B cell (primary cell): ENCODE measurements at regions of chr4 and their contacts with region 1.

Region 1: GRCh38 chr4:82373816-82374625 is at the start of gene HNRNPD:
- DNase-seq: peak; percentile 98
- ATAC-seq: peak; percentile 86
- H3K4me3 ChIP-seq: peak within 1 kb of the TSS; percentile 89 to 98 (median 95)
- H3K4me3 Mint-ChIP-seq: peak within 1 kb of the TSS; percentile 93
- H3K27ac ChIP-seq: peak within 1 kb of the TSS; percentile 98
- H3K27ac Mint-ChIP-seq: peak within 1 kb of the TSS; percentile 98
- H3K4me1 ChIP-seq: peaks cover 38% of the 10 kb centered on the region in 2 donors
- H3K4me1 Mint-ChIP-seq: peaks cover 51% of the 10 kb centered on the region
- H3K27me3 ChIP-seq: no peaks in the 10 kb centered on the region
- H3K27me3 Mint-ChIP-seq: no peaks in the 10 kb centered on the region
- CTCF ChIP-seq: no peak
- total RNA-seq, gene HNRNPD: 266 and 280 TPM in 2 replicates

Region 2: DNA sequence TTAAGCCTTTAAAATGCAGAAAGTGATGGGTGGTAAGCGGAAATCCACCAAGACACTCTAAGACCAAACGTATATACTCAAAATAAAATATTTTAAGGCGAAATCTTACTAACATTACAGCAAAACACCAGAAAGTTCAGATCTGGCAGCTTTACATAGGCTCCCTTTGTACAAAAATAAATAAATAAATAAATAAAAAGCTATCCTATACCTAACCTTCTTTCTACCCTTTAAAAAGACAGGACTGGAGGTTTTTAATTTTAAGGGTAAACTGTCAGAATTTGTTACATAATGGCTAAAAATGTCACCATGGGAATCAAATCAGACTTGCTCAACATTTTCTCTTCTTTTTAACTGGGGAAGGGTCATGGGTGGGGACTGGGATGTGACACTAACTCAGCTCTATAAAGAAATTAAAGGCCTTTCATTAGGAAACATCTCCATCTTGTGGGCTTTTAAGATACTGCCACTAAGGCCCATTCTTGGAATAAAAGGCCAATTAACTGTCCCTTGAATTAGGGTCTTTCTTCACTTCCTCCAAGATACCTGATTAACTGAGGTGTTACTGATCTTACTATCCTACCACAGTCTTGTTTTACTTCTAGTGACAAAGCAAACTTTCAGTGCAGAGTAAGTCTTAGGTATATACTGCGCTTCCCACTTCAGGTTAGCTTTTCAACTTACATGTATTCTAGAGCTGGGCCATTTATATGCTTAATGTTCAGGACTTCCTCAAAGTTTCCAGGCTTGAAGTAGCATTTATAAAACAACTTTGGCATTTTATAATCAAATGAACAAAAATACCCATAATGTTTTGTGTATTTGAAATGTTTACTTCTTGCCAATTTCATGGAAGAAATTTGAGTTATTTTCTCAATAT is 13.5 kb before region 1 on chr4:
- CTCF ChIA-PET with region 1: interaction called, 31 read pairs
- POLR2A ChIA-PET with region 1: interaction called, 3 read pairs
- intact Hi-C with region 1: loop called (anchors 1 kb)
- DNase-seq: peak; percentile 66
- ATAC-seq: peak; percentile 65
- H3K4me3 ChIP-seq: no peak overlapping the region
- H3K4me3 Mint-ChIP-seq: no peak overlapping the region
- H3K27ac ChIP-seq: peak overlapping the region in 1 of 2 donors; percentile 69
- H3K27ac Mint-ChIP-seq: peak overlapping the region; percentile 74
- H3K4me1 ChIP-seq: peaks cover 37 to 67% of the 10 kb centered on the region in 2 donors
- H3K4me1 Mint-ChIP-seq: peaks cover 75% of the 10 kb centered on the region
- H3K27me3 ChIP-seq: no peaks in the 10 kb centered on the region
- H3K27me3 Mint-ChIP-seq: no peaks in the 10 kb centered on the region
- CTCF ChIP-seq: peak; percentile 85

Region 3: DNA sequence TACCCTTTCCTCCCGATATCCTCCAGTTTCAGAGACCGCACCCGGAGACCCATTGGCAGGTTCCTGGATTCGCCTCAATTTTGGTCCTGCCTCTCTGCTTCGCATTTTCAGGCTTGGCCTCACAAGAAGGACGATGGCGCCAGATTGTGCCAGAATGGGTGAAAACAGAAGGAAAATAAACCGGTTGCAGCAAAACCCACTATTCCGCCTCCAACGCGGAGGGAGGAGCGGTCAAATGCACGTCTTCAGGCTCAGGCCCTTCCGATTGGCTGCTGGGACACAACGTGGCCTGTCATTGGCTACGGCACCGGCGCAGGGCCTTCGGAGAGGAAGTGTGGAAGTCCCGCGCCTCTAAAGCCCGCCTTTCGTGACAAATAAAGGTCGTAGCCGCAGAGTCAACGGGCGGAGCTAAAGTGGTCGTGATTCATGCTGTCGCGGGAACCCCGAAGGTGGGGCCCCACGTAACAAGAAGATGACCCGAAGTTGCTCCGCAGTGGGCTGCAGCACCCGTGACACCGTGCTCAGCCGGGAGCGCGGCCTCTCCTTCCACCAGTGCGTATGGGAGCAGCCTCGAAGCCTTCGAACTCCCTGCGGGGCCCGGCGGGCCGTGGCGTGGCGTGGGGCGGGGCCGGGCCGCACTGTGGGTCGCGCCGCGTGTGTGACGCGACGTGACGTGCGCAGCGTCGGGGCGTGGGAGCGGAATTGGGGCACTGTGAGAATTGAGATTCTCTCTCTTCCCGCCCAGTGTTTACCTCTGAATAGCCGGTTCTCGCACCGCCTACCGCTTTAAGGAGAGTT is 526.5 kb after region 1 on chr4 and contains the start of gene THAP9:
- CTCF ChIA-PET with region 1: no interaction called
- POLR2A ChIA-PET with region 1: interaction called, 7 read pairs
- intact Hi-C with region 1: loop called (anchors 1 kb)
- DNase-seq: peak; percentile 99
- ATAC-seq: peak; percentile 90
- H3K4me3 ChIP-seq: peak within 1 kb of the TSS; percentile 73 to 92 (median 90)
- H3K4me3 Mint-ChIP-seq: no peak within 1 kb of the TSS
- H3K27ac ChIP-seq: peak within 1 kb of the TSS; percentile 97 to 98
- H3K27ac Mint-ChIP-seq: no peak within 1 kb of the TSS
- H3K4me1 ChIP-seq: peaks cover 22 to 27% of the 10 kb centered on the region in 2 donors
- H3K4me1 Mint-ChIP-seq: peaks cover 11% of the 10 kb centered on the region
- H3K27me3 ChIP-seq: no peaks in the 10 kb centered on the region
- H3K27me3 Mint-ChIP-seq: no peaks in the 10 kb centered on the region
- CTCF ChIP-seq: no peak
- total RNA-seq, gene THAP9: 6.8 and 7.8 TPM in 2 replicates

Region 4: GRCh38 chr4:83034630-83035494 is 660.8 kb after region 1 on chr4 and contains the start of gene COPS4:
- CTCF ChIA-PET with region 1: no interaction called
- POLR2A ChIA-PET with region 1: interaction called, 13 read pairs
- intact Hi-C with region 1: no loop called
- DNase-seq: peak; percentile 99
- ATAC-seq: peak; percentile 95
- H3K4me3 ChIP-seq: peak within 1 kb of the TSS; percentile 80 to 94 (median 91)
- H3K4me3 Mint-ChIP-seq: peak within 1 kb of the TSS; percentile 98
- H3K27ac ChIP-seq: peak within 1 kb of the TSS; percentile 84 to 86
- H3K27ac Mint-ChIP-seq: peak within 1 kb of the TSS; percentile 98
- H3K4me1 ChIP-seq: peaks cover 10 to 16% of the 10 kb centered on the region in 2 donors
- H3K4me1 Mint-ChIP-seq: peaks cover 34% of the 10 kb centered on the region
- H3K27me3 ChIP-seq: no peaks in the 10 kb centered on the region
- H3K27me3 Mint-ChIP-seq: no peaks in the 10 kb centered on the region
- CTCF ChIP-seq: peak; percentile 34
- total RNA-seq, gene COPS4: 24.5 and 32.8 TPM in 2 replicates

Region 5: GRCh38 chr4:83484500-83485461 is 1110.8 kb after region 1 on chr4 and contains the start of gene ABRAXAS1:
- CTCF ChIA-PET with region 1: no interaction called
- POLR2A ChIA-PET with region 1: no interaction called
- intact Hi-C with region 1: loop called (anchors 10 kb)
- DNase-seq: peak; percentile 97
- ATAC-seq: peak; percentile 97
- H3K4me3 ChIP-seq: peak within 1 kb of the TSS; percentile 71 to 87 (median 77)
- H3K4me3 Mint-ChIP-seq: peak within 1 kb of the TSS; percentile 99
- H3K27ac ChIP-seq: peak within 1 kb of the TSS; percentile 60 to 70
- H3K27ac Mint-ChIP-seq: peak within 1 kb of the TSS; percentile 95
- H3K4me1 ChIP-seq: peaks cover 10 to 17% of the 10 kb centered on the region in 2 donors
- H3K4me1 Mint-ChIP-seq: peaks cover 21% of the 10 kb centered on the region
- H3K27me3 ChIP-seq: no peaks in the 10 kb centered on the region
- H3K27me3 Mint-ChIP-seq: no peaks in the 10 kb centered on the region
- CTCF ChIP-seq: no peak
- total RNA-seq, gene ABRAXAS1: 34.4 and 38.4 TPM in 2 replicates